ENCODE measurements at regions of chr11 and their contacts with region 1.

Region 1: GRCh38 chr11:125429166-125429707 is 66.8 kb downstream of the FEZ1 start:
- DNase-seq: peak; percentile 65
- ATAC-seq: peak; percentile 24

Region 2: DNA sequence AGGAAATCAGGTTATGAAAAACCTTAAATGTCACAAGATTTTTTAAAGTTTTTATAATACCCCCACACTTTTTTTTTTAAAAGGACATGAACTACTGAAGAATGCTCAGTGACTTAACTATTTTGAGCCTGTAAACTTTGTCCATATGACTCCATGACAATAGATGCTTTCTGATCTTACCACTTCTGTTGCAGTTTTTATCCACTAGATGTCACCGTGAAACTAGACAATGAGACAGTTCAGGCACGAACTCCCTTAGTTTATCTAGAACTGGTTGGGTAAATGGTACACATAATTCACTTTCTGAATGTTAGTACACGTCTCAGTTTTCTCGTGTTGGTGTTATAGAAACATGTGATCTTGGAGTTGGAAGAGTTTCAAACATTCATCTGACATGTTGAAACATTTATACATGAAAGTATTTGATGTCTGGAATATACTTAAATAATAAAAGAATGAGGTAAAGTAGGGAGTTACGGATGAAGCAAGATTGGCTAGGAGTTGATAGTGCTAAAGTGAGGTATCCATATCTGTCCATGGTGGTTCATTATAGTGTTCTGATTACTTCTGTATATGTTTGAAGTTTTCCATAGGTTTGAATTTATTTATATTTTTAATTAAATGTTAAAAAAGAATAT is 467.1 kb before region 1 on chr11:
- intact Hi-C with region 1: loop called (anchors 2 kb)
- DNase-seq: no peak
- ATAC-seq: peak; percentile 75

Region 3: GRCh38 chr11:125070699-125071254 is 358.5 kb before region 1 on chr11:
- intact Hi-C with region 1: no loop called
- DNase-seq: peak; percentile 83
- ATAC-seq: peak; percentile 87

Region 4: GRCh38 chr11:125091247-125091876 is 337.9 kb before region 1 on chr11:
- intact Hi-C with region 1: loop called (anchors 10 kb)
- DNase-seq: no peak
- ATAC-seq: peak; percentile 88

Region 5: GRCh38 chr11:125111343-125112207 is 317.7 kb before region 1 on chr11 and contains the start of gene TMEM218:
- intact Hi-C with region 1: loop called (anchors 5 kb)
- DNase-seq: peak; percentile 99
- ATAC-seq: peak; percentile 100
- total RNA-seq, gene TMEM218: 6.0 TPM

Region 6: DNA sequence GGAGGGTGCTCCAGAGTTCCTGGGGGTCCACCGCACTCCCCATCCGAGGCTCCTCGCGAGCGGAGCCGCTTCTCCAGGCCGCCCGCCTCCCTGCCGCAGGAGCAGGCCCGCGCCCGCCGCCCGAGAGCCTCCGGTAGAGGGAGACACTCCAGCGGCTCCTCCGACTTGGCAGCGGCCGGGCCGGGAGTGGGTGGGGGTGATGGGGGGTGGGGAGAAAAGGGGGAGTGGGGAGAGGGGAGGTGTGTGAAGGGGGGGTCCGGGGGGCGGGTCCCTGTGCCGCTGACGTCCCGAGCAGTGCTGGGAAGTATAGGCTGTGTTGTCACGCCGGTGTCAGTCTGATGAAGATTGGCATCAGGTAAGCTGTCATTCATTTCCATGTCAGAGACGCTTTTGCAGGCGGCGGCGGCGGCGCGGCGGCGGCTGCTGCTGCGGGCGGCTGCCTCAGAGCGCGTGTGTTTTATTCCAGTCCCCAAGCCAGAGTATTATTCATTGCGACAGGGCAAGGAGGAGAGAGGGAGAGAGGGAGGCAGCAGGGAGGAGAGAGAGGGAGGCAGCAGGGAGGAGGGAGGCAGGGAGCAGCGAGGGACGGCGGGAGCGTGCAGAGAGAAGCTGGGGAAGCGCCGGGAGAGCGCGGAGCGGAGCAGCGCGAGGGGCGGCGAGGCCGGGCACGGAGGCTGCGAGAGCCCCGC is 264.7 kb before region 1 on chr11 and contains the start of gene PKNOX2:
- intact Hi-C with region 1: loop called (anchors 2 kb)
- DNase-seq: peak; percentile 84
- ATAC-seq: peak; percentile 83
- total RNA-seq, gene PKNOX2: 9.1 TPM

Region 7: GRCh38 chr11:125295931-125296330 is 133.3 kb before region 1 on chr11:
- intact Hi-C with region 1: no loop called
- DNase-seq: no peak
- ATAC-seq: no peak

Region 8: GRCh38 chr11:125559888-125560287 is 130.7 kb after region 1 on chr11:
- intact Hi-C with region 1: no loop called
- DNase-seq: no peak
- ATAC-seq: no peak

Measured in Right ventricle myocardium inferior (tissue), 1 donor.